PC-3 (cell line): ENCODE measurements at regions of chr2 and their contacts with region 1.

Region 1: DNA sequence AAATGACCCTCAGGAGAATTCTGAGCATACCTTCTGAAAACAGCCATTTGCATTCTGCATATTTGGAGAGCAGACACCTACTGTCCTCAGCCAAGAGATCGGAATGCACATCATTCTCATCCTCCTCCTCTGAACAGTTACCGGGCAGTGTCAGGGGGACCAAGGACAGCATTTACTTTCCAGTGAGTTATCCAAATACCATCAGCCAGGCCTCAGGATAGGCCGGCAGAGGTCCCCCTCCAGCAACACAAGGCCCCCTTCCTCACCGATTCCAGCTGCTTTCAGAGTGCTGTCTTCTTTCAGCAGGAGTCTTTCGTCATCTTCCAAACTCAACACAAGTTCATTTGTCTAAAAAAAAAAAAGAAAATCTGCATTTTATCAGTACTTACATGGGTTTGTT is 55.3 kb downstream of the C2orf76 start:
- DNase-seq: no peak
- ATAC-seq: no peak
- H3K4me3 ChIP-seq: no peak overlapping the region
- H3K27ac ChIP-seq: no peak overlapping the region
- H3K4me1 ChIP-seq: peaks cover 14% of the 10 kb centered on the region
- H3K27me3 ChIP-seq: no peaks in the 10 kb centered on the region
- CTCF ChIP-seq: no peak

Region 2: GRCh38 chr2:118940486-118941205 is 370.7 kb before region 1 on chr2:
- CTCF ChIA-PET with region 1: no interaction called
- POLR2A ChIA-PET with region 1: no interaction called
- intact Hi-C with region 1: no loop called
- DNase-seq: no peak
- ATAC-seq: no peak
- H3K4me3 ChIP-seq: no peak overlapping the region
- H3K27ac ChIP-seq: no peak overlapping the region
- H3K4me1 ChIP-seq: no peaks in the 10 kb centered on the region
- H3K27me3 ChIP-seq: peaks cover 15% of the 10 kb centered on the region
- CTCF ChIP-seq: no peak

Region 3: DNA sequence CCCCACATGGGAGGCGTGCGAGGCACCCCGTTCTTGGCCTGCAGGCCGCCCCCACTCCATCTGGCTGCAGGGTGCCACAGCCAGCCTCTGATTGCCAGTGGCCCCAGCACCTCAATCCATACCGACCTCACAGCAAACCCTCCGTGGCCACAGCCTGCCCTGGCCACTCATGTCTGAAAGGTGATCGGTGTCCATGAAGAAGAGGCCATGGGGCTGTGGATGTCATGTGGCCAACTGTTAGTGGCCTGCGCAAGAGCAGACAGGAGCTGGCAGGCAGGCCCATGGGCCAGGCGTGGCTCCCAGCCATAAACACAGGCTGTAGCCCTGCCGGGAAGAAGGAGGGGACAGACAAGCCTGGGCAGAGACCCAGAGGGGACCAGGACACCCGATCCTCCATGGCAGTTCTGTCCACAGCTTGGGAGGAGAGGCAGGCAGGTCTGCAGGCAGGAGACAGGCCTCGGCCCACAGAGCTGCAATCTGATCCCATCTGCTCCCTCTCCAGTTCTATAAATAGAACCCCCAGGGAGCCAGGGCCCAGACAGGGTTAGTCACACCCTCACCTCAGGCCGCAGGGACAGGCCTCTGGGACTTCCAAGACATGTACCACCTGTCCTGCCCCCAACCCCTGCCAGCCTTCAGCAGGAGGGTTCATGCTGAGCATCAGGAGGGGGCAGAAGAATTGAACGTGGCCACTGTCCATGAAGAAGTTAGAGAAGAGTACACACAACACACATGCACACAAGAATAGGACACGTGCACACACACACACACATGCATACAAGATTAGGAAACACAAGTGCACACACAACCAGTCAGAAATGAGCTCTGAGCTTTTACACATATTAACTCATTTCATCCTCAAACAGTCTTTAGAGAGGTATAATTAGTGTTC is 70.8 kb before region 1 on chr2:
- CTCF ChIA-PET with region 1: no interaction called
- POLR2A ChIA-PET with region 1: no interaction called
- intact Hi-C with region 1: no loop called
- DNase-seq: peak; percentile 71
- ATAC-seq: peak; percentile 98
- H3K4me3 ChIP-seq: no peak overlapping the region
- H3K27ac ChIP-seq: peak overlapping the region; percentile 70
- H3K4me1 ChIP-seq: peaks cover 15% of the 10 kb centered on the region
- H3K27me3 ChIP-seq: no peaks in the 10 kb centered on the region
- CTCF ChIP-seq: no peak

Region 4: GRCh38 chr2:119366649-119367471 is 55.5 kb after region 1 on chr2 and contains the starts of genes C2orf76 and DBI:
- CTCF ChIA-PET with region 1: no interaction called
- POLR2A ChIA-PET with region 1: no interaction called
- intact Hi-C with region 1: loop called (anchors 10 kb)
- DNase-seq: peak; percentile 98
- ATAC-seq: peak; percentile 95
- H3K4me3 ChIP-seq: peak within 1 kb of the TSS; percentile 79
- H3K27ac ChIP-seq: peak within 1 kb of the TSS; percentile 66
- H3K4me1 ChIP-seq: peaks cover 29% of the 10 kb centered on the region
- H3K27me3 ChIP-seq: no peaks in the 10 kb centered on the region
- CTCF ChIP-seq: no peak
- total RNA-seq, gene C2orf76: 3.1 and 10.2 TPM in 2 replicates
- total RNA-seq, gene DBI: 197 and 273 TPM in 2 replicates

Region 5: GRCh38 chr2:119389615-119390306 is 78.4 kb after region 1 on chr2:
- CTCF ChIA-PET with region 1: no interaction called
- POLR2A ChIA-PET with region 1: no interaction called
- intact Hi-C with region 1: no loop called
- DNase-seq: peak; percentile 89
- ATAC-seq: peak; percentile 68
- H3K4me3 ChIP-seq: peak overlapping the region; percentile 23; the same call in 1 of the 2 replicates
- H3K27ac ChIP-seq: no peak overlapping the region
- H3K4me1 ChIP-seq: peaks cover 17% of the 10 kb centered on the region
- H3K27me3 ChIP-seq: no peaks in the 10 kb centered on the region
- CTCF ChIP-seq: no peak

Region 6: DNA sequence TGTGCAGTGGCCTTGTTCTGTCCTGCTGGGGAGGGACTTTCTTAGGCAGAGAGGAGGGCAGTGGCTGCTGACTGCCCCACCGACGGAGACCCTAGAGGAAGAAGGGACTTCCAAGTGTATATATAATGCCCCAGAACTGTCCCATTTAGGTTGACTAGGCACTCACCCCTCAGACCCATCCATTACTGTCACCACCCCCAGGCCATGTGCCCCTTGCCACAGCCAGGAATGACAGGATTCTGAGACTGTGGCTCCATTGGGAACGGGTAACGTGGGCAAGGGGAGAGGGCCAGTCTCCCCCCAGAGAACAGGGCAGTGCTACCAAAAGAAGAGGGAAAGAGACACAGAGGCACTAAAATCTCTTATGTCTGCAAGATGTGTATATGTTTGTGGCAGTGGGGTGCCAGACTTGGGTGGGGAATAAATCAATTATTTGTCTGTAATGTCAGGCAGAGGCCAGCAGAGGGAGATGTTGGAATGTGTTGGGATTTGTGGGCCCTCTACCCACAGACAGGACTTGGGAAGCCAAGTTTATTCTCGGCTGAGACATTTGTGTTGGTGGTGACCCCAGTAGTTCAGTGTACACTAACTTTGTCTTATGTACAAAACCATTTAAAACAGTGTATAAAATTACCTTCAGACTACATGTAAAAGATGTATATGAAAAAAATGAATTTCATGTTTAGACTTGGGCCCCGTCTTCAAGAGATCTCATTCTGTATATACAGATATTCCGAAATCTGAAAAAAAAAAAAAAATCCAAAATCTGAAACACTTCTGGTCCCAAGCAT is 96.3 kb after region 1 on chr2:
- CTCF ChIA-PET with region 1: no interaction called
- POLR2A ChIA-PET with region 1: no interaction called
- intact Hi-C with region 1: no loop called
- DNase-seq: peak; percentile 71
- ATAC-seq: peak; percentile 56
- H3K4me3 ChIP-seq: no peak overlapping the region
- H3K27ac ChIP-seq: no peak overlapping the region
- H3K4me1 ChIP-seq: no peaks in the 10 kb centered on the region
- H3K27me3 ChIP-seq: no peaks in the 10 kb centered on the region
- CTCF ChIP-seq: peak; percentile 77